A673 (cell line): ENCODE measurements at regions of chr6 and their contacts with region 1.

Region 1: DNA sequence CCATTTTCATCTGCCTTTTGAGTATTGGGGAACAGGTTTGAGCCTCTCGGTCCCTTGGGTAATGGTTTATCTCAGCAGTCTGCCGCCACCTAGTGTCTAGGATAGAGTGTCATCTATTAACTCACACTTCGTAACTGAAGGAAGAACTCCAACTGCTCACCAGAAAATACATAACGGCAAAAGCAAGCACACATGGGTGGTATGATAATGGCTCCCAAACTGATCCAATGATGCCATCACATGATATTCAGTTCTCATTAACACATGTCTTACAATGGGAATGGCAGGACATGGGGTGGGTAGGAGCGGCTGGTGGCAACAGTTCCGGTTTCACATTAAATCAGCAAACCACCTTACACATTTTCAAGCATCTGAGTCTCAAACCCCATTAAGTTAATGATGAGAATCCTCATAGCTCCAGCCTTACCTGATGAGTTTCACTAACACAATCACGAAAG is 110.7 kb upstream of the PHACTR1 start:
- DNase-seq: peak; percentile 82
- H3K4me3 ChIP-seq: no peak overlapping the region
- H3K27ac ChIP-seq: no peak overlapping the region
- H3K4me1 ChIP-seq: peaks cover 11% of the 10 kb centered on the region
- H3K27me3 ChIP-seq: no peaks in the 10 kb centered on the region
- CTCF ChIP-seq: peak; percentile 82

Region 2: DNA sequence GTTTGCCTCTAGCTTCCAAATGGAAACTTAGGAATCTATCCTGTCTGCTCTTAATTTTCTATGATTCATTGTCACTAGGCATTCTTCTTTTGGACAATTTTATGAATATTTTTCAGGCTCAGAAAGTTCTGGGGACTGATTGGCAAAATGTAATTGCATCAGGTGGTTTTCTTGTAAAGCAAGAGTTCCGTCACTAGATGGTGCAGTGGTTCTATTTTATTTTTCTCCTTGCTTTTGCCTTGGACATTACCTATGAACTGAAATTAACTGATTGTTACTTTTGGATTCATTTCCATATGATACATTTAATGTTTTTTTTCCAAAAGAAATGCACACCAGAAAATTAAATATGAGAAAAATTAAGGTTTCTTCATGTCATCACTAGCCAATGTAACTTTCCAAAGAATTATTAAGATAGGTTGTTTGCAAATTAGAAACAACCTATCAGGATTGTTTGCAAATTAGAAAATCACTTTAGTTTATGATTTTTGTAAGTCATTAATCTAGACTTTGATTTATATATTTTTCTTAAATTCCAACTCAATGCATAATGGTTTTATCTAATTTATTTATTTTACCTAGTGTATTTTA is 1020.4 kb before region 1 on chr6:
- CTCF ChIA-PET with region 1: interaction called, 4 read pairs
- POLR2A ChIA-PET with region 1: no interaction called
- intact Hi-C with region 1: loop called (anchors 5 kb)
- DNase-seq: peak; percentile 60
- H3K4me3 ChIP-seq: no peak overlapping the region
- H3K27ac ChIP-seq: no peak overlapping the region
- H3K4me1 ChIP-seq: no peaks in the 10 kb centered on the region
- H3K27me3 ChIP-seq: no peaks in the 10 kb centered on the region
- CTCF ChIP-seq: peak; percentile 74

Region 3: GRCh38 chr6:12289933-12290820 is 315.7 kb before region 1 on chr6 and contains the start of gene EDN1:
- CTCF ChIA-PET with region 1: interaction called, 7 read pairs
- POLR2A ChIA-PET with region 1: no interaction called
- intact Hi-C with region 1: loop called (anchors 5 kb)
- DNase-seq: peak; percentile 87
- H3K4me3 ChIP-seq: peak within 1 kb of the TSS; percentile 39
- H3K27ac ChIP-seq: no peak within 1 kb of the TSS
- H3K4me1 ChIP-seq: no peaks in the 10 kb centered on the region
- H3K27me3 ChIP-seq: peaks cover 25% of the 10 kb centered on the region
- CTCF ChIP-seq: peak; percentile 45
- total RNA-seq, gene EDN1: not detected in 2 replicates

Region 4: GRCh38 chr6:12477616-12478015 is 128.3 kb before region 1 on chr6:
- CTCF ChIA-PET with region 1: interaction called, 23 read pairs
- POLR2A ChIA-PET with region 1: no interaction called
- intact Hi-C with region 1: no loop called
- DNase-seq: no peak
- H3K4me3 ChIP-seq: no peak overlapping the region
- H3K27ac ChIP-seq: no peak overlapping the region
- H3K4me1 ChIP-seq: no peaks in the 10 kb centered on the region
- H3K27me3 ChIP-seq: no peaks in the 10 kb centered on the region
- CTCF ChIP-seq: no peak

Region 5: DNA sequence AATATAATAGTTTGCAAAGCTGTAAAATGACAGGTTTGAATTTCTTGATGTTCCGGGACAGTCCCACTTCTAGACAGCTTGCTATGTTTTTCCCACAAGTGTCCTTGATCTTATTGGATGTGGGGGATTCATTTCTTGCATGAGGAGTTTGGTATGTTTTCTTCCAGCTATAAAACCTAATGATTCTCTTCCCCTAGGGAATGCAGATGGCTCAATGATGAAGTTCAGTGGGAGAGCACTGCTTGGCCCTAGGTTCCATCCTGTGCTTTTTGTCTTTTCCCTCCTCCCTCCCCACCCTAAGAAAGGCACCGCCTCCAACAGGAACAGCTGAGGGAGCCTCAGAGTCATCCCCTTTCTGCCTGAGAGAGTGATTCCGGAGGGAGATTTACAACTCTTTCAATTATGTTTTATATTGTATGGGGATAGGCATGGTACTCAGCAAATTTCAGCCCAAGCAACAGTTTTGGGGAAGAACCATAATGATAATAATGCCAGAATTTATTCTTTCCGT is 259.8 kb after region 1 on chr6:
- CTCF ChIA-PET with region 1: no interaction called
- POLR2A ChIA-PET with region 1: no interaction called
- intact Hi-C with region 1: no loop called
- DNase-seq: peak; percentile 66
- H3K4me3 ChIP-seq: no peak overlapping the region
- H3K27ac ChIP-seq: no peak overlapping the region
- H3K4me1 ChIP-seq: peaks cover 7% of the 10 kb centered on the region
- H3K27me3 ChIP-seq: no peaks in the 10 kb centered on the region
- CTCF ChIP-seq: no peak

Region 6: DNA sequence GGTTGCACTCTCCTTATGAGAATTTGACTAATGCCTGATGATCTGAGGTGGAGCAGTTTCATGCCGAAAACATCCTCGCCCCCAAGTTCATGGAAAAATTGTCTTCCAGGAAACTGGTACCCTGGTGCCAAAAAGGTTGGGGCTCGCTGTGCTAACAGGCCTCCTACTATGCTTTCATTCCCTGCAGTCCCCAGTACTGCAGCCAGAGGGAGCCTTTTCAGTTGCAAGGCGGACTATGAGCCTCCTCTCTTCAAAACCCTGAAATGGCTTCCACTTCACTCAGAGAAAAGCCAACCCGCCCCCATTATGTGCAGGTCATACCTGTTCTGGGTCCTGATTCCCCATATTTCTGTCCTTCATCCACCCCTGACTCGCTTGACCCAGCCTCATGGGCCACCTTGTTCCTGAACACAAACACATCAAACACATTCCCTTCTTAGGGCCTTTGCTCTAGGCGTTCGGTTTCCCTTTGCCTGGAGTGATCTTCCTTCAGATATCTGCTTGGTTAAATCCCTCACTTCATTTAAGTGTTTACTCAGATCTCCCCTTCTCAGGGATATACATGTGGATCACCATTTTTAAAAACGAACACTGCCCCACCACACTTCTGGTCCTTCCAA is 284.4 kb after region 1 on chr6:
- CTCF ChIA-PET with region 1: interaction called, 3 read pairs
- POLR2A ChIA-PET with region 1: no interaction called
- intact Hi-C with region 1: loop called (anchors 10 kb)
- DNase-seq: peak; percentile 40
- H3K4me3 ChIP-seq: no peak overlapping the region
- H3K27ac ChIP-seq: no peak overlapping the region
- H3K4me1 ChIP-seq: peaks cover 12% of the 10 kb centered on the region
- H3K27me3 ChIP-seq: no peaks in the 10 kb centered on the region
- CTCF ChIP-seq: peak; percentile 65